CD4-positive, alpha-beta T cell (primary cell): ENCODE measurements at regions of chr20 and their contacts with region 1.

Region 1: DNA sequence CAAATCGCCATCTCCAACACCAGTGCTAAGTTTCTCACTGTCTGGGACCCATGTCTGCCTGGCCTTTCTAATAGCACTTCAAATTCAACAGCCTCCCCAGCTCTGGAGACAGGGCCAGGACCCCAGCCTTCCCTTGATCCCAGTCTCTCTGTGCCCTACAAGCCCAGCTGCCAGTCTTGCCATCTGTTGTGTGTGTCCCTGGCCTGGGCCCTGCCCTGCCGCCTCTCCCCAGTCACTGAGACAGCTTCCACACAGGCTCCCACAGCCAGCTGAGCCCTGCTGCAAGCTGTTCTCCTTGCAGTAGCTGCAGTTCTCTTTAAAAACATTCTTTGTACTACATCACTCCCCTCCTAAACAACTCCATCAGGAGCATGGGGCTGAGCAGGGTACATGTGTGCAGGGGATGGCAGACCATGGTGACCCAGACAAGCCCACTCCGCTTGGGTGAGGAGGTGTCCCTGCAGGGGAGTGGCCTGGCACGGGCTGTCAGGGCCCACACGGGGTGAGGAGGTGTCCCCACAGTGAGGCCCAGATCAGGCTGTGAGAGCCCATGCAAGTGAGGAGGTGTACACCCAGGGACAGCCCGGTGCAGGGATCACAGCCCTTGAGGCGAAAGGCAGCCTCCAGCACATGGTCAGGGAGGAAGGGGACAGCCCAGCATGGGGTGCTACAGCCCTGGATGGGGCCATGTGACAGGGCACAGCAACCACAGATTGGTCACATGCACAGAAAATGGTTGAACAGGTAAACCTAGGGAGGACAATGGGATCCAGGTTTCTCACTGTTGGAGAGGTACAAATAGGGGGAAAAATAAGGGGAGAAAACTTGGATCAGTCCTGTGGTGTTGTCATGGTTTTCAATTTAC is 16.2 kb downstream of the CST7 start:
- DNase-seq: peak in 2 of 14 experiments; percentile 6 to 28
- ATAC-seq: no peak
- H3K4me3 ChIP-seq: no peak overlapping the region
- H3K4me3 Mint-ChIP-seq: no peak overlapping the region
- H3K27ac ChIP-seq: no peak overlapping the region
- H3K27ac Mint-ChIP-seq: no peak overlapping the region
- H3K4me1 ChIP-seq: peaks cover 36% of the 10 kb centered on the region
- H3K4me1 Mint-ChIP-seq: no peaks in the 10 kb centered on the region
- H3K27me3 ChIP-seq: no peaks in the 10 kb centered on the region
- H3K27me3 Mint-ChIP-seq: no peaks in the 10 kb centered on the region
- CTCF ChIP-seq: no peak

Region 2: GRCh38 chr20:24634855-24635254 is 330.4 kb before region 1 on chr20:
- CTCF ChIA-PET with region 1: no interaction called
- POLR2A ChIA-PET with region 1: no interaction called
- intact Hi-C with region 1: loop called in 1 of 2 experiments (anchors 10 kb)
- DNase-seq: no peak
- ATAC-seq: no peak
- H3K4me3 ChIP-seq: no peak overlapping the region
- H3K4me3 Mint-ChIP-seq: no peak overlapping the region
- H3K27ac ChIP-seq: no peak overlapping the region
- H3K27ac Mint-ChIP-seq: no peak overlapping the region
- H3K4me1 ChIP-seq: no peaks in the 10 kb centered on the region
- H3K4me1 Mint-ChIP-seq: peaks cover 3% of the 10 kb centered on the region
- H3K27me3 ChIP-seq: peaks cover 0 to 5% of the 10 kb centered on the region in 2 experiments
- H3K27me3 Mint-ChIP-seq: peaks cover 3% of the 10 kb centered on the region
- CTCF ChIP-seq: no peak

Region 3: GRCh38 chr20:24992487-24993205 is 27.3 kb after region 1 on chr20 and contains the start of gene APMAP:
- CTCF ChIA-PET with region 1: no interaction called
- POLR2A ChIA-PET with region 1: no interaction called
- intact Hi-C with region 1: no loop called
- DNase-seq: peak; percentile 89 to 99 (median 96)
- ATAC-seq: peak; percentile 91
- H3K4me3 ChIP-seq: peak within 1 kb of the TSS; percentile 87
- H3K4me3 Mint-ChIP-seq: peak within 1 kb of the TSS; percentile 96
- H3K27ac ChIP-seq: peak within 1 kb of the TSS; percentile 90 to 97
- H3K27ac Mint-ChIP-seq: peak within 1 kb of the TSS; percentile 99
- H3K4me1 ChIP-seq: peaks cover 42% of the 10 kb centered on the region
- H3K4me1 Mint-ChIP-seq: peaks cover 73% of the 10 kb centered on the region
- H3K27me3 ChIP-seq: no peaks in the 10 kb centered on the region
- H3K27me3 Mint-ChIP-seq: no peaks in the 10 kb centered on the region
- CTCF ChIP-seq: no peak
- total RNA-seq, gene APMAP: 9.5 to 11.3 TPM